Activated CD4-positive, alpha-beta T cell treated with anti-CD3 and anti-CD28 coated beads for 36 hours (primary cell): ENCODE measurements at regions of chr2 and their contacts with region 1.

Region 1: GRCh38 chr2:151388011-151388410 is 21.7 kb upstream of the RIF1 start:
- DNase-seq: no peak
- ATAC-seq: no peak
- H3K4me3 Mint-ChIP-seq: no peak overlapping the region
- H3K27ac Mint-ChIP-seq: no peak overlapping the region
- H3K4me1 Mint-ChIP-seq: no peaks in the 10 kb centered on the region
- H3K27me3 Mint-ChIP-seq: no peaks in the 10 kb centered on the region

Region 2: GRCh38 chr2:151374426-151374825 is 13.6 kb before region 1 on chr2:
- CTCF ChIA-PET with region 1: no interaction called
- POLR2A ChIA-PET with region 1: no interaction called
- intact Hi-C with region 1: loop called in 1 of 2 experiments (anchors 1 kb)
- DNase-seq: no peak
- ATAC-seq: peak; percentile 79
- H3K4me3 Mint-ChIP-seq: no peak overlapping the region
- H3K27ac Mint-ChIP-seq: no peak overlapping the region
- H3K4me1 Mint-ChIP-seq: peaks cover 8% of the 10 kb centered on the region
- H3K27me3 Mint-ChIP-seq: no peaks in the 10 kb centered on the region

Region 3: DNA sequence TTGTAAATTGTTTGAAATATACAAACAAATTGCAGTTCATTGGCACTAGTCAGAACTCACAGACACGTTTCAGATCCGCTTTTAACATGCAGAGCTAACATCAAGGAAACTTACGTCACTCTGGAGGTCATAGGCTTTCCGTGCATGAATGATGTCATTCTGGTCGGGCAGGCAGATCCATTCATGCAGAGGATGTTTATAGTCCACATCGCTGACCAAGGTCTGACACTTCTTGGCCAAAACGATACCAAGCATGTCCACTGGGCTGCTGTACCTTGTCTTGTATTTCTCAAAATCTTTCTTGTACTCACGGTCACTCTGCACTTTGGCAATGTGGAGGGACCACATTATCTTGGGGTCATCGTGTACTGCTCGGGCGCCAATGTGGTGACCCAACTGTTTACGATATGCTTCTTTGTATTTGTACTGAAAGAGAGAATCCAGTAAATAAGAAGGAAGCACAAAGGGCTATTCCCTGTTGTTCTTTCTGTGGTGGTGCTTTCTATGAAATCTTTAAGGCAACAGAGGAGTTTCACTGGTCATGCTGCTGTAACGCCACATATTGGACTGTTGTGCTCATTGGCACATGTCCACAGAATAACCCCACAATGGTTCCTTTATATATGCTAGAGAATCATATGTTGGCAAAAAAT is 231.5 kb after region 1 on chr2:
- CTCF ChIA-PET with region 1: no interaction called
- POLR2A ChIA-PET with region 1: no interaction called
- intact Hi-C with region 1: no loop called
- DNase-seq: no peak
- ATAC-seq: no peak
- H3K4me3 Mint-ChIP-seq: no peak overlapping the region
- H3K27ac Mint-ChIP-seq: no peak overlapping the region
- H3K4me1 Mint-ChIP-seq: peaks cover 9% of the 10 kb centered on the region
- H3K27me3 Mint-ChIP-seq: no peaks in the 10 kb centered on the region